Activated CD4-positive, alpha-beta memory T cell treated with anti-CD3 and anti-CD28 coated beads, Interleukin-2, amount 10 ng/mL, durations not matched to agents 7 days and 5 days (primary cell): ENCODE measurements at regions of chr11 and their contacts with region 1.

Region 1: DNA sequence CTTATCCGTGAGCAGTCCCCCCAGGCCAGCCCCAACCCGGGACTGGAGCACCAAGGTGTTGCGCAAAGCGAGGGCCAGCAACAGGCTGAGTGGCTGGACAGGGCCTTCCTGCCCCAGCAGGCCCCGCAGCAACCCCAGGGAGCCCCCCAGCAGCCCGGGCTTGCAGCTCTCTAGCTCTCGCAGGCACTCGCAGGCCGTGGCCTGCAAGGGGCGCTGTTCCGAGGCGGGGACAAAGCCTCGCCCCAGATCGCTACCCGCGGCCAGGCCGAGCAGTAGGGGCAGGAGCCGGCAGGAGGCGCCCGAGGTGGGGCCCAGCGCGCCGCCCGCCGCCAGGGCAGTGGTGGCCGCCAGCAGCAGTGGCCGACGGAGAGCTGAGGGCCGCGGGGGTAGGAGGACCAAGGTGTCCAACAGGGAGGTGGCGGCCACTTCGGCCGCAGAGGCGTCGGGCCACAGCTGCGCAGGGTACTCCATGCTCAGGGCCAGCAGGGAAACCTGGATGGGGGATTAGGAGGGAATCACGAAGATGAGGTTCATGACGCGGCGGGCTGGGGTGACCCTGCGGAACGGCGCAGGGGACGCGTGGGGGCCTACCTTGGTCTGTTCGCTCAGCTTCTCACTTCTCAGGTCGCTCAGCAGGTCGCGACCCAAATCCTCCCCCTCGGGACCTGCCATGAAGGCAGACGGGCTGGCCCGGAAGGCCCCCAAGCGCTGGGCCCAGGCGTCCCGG is 762 bp downstream of the AP5B1 start:
- DNase-seq: peak; percentile 88
- H3K4me3 Mint-ChIP-seq: peak overlapping the region; percentile 86
- H3K27ac Mint-ChIP-seq: peak overlapping the region; percentile 74
- H3K4me1 Mint-ChIP-seq: peaks cover 23% of the 10 kb centered on the region
- H3K27me3 Mint-ChIP-seq: peaks cover 17% of the 10 kb centered on the region

Region 2: GRCh38 chr11:65711785-65712632 is 68.0 kb before region 1 on chr11 and contains the start of gene KAT5:
- CTCF ChIA-PET with region 1: interaction called, 37 read pairs
- POLR2A ChIA-PET with region 1: interaction called, 24 read pairs
- DNase-seq: peak; percentile 99
- H3K4me3 Mint-ChIP-seq: peak within 1 kb of the TSS; percentile 82
- H3K27ac Mint-ChIP-seq: peak within 1 kb of the TSS; percentile 95
- H3K4me1 Mint-ChIP-seq: peaks cover 42% of the 10 kb centered on the region
- H3K27me3 Mint-ChIP-seq: no peaks in the 10 kb centered on the region
- total RNA-seq, gene KAT5: 62.6 to 63.0 TPM

Region 3: GRCh38 chr11:65766535-65766934 is 13.5 kb before region 1 on chr11:
- CTCF ChIA-PET with region 1: interaction called, 36 read pairs
- POLR2A ChIA-PET with region 1: interaction called, 9 read pairs
- DNase-seq: no peak
- H3K4me3 Mint-ChIP-seq: no peak overlapping the region
- H3K27ac Mint-ChIP-seq: no peak overlapping the region
- H3K4me1 Mint-ChIP-seq: peaks cover 7% of the 10 kb centered on the region
- H3K27me3 Mint-ChIP-seq: peaks cover 1% of the 10 kb centered on the region

Region 4: DNA sequence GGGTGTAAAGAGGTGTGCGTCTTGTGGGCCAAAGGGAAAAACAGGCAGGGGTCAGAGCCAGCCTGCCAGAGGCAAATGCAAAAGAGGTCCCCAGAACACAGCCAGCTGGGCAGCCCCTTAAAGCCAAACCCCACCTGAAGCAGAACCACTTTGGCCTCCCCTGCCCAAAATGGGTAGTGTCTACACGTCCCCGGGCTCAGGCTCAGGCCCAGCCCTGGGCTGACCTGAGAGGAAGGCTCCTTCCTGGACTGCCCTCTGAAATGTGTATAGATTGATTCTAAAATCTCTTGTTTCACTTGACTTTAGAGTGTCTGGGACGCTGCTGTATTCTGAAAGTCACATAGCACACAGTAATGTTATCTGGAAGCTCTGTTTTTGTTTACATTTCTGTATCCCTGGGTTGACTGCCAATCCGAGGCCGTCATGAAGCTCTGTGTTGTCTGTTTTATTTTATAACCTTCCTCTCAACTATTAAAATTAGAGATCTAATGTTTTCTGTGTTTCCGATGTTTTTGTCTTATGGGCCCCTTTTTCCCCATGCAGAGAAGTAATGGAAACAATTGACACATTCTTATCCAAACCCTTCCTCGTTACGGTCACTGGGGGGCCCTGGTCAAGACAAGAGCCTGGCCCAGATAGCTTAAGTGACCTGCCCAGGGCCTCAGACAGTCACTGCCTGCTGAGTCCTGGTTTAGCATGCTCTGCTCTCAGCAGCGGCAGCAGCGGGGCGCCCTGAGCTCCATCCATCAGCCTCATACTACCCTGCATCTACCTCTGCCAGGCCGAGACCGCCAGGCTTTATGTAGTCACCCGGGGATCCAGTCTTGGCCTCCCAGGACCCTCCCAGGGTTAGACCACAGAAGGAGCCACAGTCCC is 16.9 kb after region 1 on chr11:
- CTCF ChIA-PET with region 1: interaction called, 43 read pairs
- POLR2A ChIA-PET with region 1: interaction called, 25 read pairs
- DNase-seq: no peak
- H3K4me3 Mint-ChIP-seq: no peak overlapping the region
- H3K27ac Mint-ChIP-seq: no peak overlapping the region
- H3K4me1 Mint-ChIP-seq: peaks cover 18% of the 10 kb centered on the region
- H3K27me3 Mint-ChIP-seq: peaks cover 11% of the 10 kb centered on the region

Region 5: GRCh38 chr11:65817835-65818742 is 38.1 kb after region 1 on chr11:
- CTCF ChIA-PET with region 1: interaction called, 126 read pairs
- POLR2A ChIA-PET with region 1: interaction called, 31 read pairs
- DNase-seq: peak; percentile 94
- H3K4me3 Mint-ChIP-seq: peak overlapping the region; percentile 74
- H3K27ac Mint-ChIP-seq: peak overlapping the region; percentile 65
- H3K4me1 Mint-ChIP-seq: peaks cover 17% of the 10 kb centered on the region
- H3K27me3 Mint-ChIP-seq: peaks cover 17% of the 10 kb centered on the region

Region 6: DNA sequence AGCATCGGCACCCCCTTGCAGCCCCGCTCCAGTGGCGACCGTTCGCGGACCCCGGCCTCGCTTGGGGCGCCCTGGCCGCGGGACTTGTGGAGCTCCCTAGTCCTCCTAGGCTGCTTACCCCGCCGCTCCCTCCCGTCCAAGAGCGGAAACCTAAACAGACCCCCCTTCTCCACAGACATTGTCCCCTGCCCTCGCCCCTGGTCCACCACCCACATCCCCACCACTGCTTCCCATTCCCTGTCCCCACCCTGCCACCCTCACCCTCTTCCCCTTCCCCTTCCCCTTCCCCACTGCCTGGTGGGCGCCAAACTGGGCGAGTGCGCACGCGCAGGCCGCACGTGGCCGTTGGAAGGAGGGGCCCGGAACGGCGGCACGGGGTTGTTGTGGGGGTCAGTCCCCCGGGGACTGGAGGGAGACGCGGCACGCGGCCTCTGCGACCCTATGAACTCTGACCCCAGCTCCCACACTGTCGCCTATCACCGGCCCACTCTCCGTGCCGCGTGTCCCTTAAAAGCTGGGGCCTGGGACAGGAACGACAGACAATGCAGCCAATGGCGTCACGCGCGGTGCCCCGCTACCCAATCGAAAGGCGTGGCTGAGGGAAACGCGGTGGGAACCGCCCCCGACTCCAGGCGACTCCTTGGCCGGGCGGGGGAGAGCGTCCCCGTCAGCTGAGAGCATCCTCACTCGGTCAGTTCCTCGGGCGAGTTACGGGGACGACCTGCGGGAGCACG is 53.5 kb after region 1 on chr11 and contains the start of gene SNX32:
- CTCF ChIA-PET with region 1: interaction called, 18 read pairs
- POLR2A ChIA-PET with region 1: interaction called, 4 read pairs
- DNase-seq: peak; percentile 96
- H3K4me3 Mint-ChIP-seq: no peak within 1 kb of the TSS
- H3K27ac Mint-ChIP-seq: peak within 1 kb of the TSS; percentile 29
- H3K4me1 Mint-ChIP-seq: peaks cover 19% of the 10 kb centered on the region
- H3K27me3 Mint-ChIP-seq: peaks cover 26% of the 10 kb centered on the region
- total RNA-seq, gene SNX32: 0.83 to 1.6 TPM